ENCODE measurements at regions of chrX and their contacts with region 1.

Region 1: GRCh38 chrX:49269010-49269767 is 404 bp upstream of the PPP1R3F start:
- DNase-seq: peak; percentile 97

Region 2: GRCh38 chrX:48696301-48697181 is 572.6 kb before region 1 on chrX and contains the start of gene SUV39H1:
- intact Hi-C with region 1: no loop called
- DNase-seq: peak; percentile 94
- total RNA-seq, gene SUV39H1: 2.5 TPM

Region 3: GRCh38 chrX:49199906-49200771 is 69.0 kb before region 1 on chrX and contains the start of gene SYP:
- intact Hi-C with region 1: loop called (anchors 5 kb)
- DNase-seq: peak; percentile 92
- total RNA-seq, gene SYP: 1.2 TPM

Region 4: GRCh38 chrX:49237060-49237459 is 32.1 kb before region 1 on chrX:
- intact Hi-C with region 1: loop called (anchors 5 kb)
- DNase-seq: no peak

Region 5: DNA sequence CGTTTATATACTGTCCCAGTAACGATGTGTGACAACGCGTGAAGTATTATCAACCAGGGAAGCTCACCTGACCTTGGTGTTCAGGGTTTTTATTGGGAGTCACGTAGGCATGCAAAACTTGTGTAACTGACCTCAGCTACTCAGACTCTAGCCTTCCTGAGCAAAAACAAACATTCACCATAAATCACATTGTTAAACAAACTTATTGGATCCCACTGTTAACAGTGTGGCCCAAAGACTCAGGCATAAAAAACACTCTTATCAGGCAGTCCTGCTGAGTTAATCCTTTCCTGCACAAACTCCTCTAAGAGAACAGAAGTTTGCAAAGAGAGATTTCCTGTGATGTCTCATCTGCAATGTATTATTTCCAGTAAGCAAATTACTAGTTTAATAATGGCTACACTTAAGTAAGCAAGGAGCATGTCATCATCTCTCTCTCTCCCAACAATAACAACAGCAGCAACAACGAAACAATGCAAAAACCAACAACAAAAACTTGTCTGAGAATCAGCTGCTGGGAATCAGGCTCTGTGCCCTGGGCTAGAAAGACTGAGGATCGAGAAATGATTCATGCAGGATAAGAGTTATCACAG is 341.6 kb after region 1 on chrX:
- intact Hi-C with region 1: no loop called
- DNase-seq: no peak

Measured in cardiac septum (tissue), 1 donor.